Activated CD4-positive, alpha-beta memory T cell treated with anti-CD3 and anti-CD28 coated beads, Interleukin-2, amount 10 ng/mL, durations not matched to agents 7 days and 5 days (primary cell): ENCODE measurements at regions of chr4 and their contacts with region 1.

Region 1: GRCh38 chr4:26885912-26886274 is 25.3 kb downstream of the STIM2 start:
- DNase-seq: peak; percentile 42
- H3K4me3 Mint-ChIP-seq: peak overlapping the region; percentile 72
- H3K27ac Mint-ChIP-seq: peak overlapping the region; percentile 95
- H3K4me1 Mint-ChIP-seq: peaks cover 70% of the 10 kb centered on the region
- H3K27me3 Mint-ChIP-seq: no peaks in the 10 kb centered on the region

Region 2: DNA sequence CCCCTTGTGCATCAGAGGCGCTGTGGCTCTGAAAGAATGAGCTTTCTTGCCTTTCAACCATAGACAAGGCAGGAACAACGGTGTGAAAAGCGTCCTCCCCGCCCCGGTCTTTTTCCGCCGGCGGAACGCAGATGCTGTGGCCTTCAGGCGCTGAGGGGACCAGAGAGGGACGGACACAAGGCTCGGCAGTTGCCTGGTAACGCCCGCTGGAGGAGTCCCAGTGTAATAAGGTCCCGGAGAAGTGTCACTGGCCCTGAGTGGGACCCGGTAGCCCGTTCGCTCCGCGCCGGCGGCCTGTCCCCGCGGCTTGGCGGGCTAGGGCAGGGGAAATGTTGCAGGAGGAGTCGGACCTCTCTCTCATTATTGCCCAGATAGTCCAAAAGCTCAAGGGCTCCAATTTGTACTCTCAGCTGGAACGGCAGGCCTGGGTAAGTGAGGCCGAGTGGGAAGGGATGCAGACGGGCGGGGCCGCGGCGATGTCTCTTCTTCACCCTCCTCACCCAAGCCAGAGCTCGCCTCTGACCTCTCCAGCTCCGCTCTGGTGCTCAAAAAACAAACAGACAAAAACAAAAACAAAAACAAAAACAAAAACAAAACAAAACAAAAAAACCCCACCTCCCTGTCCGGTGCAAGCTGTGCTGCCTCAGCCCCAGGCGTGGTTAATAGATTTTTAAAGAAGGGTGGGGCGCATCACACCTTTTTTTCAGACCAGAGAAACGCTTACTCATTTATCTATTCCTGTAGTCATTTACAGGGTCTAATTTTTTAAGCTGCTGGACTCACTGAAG is 301.8 kb before region 1 on chr4 and contains the start of gene TBC1D19:
- CTCF ChIA-PET with region 1: no interaction called
- POLR2A ChIA-PET with region 1: interaction called, 20 read pairs
- DNase-seq: peak; percentile 91
- H3K4me3 Mint-ChIP-seq: peak within 1 kb of the TSS; percentile 90
- H3K27ac Mint-ChIP-seq: peak within 1 kb of the TSS; percentile 86
- H3K4me1 Mint-ChIP-seq: peaks cover 33% of the 10 kb centered on the region
- H3K27me3 Mint-ChIP-seq: no peaks in the 10 kb centered on the region
- total RNA-seq, gene TBC1D19: 5.6 to 7.1 TPM

Region 3: DNA sequence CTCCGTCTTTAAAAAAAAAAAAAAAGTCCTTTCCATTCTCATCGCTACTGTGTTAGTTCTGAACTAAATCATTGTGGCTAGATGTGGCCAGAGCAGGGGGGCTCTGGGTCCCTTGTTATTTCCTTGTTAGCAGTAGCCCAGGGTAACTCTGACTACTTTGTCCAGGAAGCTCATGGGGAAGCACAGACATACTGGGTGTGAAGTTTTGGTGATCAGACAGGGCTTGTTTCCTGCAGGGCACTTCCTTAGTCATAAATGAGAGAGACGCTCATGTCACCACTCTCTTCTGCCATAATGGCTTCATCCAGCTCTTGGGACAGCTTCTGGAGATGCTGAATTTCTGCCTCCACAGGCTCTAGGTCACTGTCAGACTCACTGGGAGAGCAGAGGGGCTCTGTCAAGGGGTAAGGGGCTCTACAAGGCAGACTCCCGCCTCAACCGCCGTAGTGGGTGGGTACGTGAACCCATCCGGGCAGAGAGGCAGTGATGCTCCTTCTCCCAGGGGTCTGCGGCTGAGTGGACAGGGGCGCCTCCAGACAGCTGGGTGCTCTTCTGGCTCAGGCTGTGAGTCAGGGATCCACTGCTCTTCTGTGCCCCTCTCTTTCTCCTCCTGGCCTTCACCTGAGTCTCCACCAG is 12.4 kb before region 1 on chr4:
- CTCF ChIA-PET with region 1: interaction called, 6 read pairs
- POLR2A ChIA-PET with region 1: interaction called, 59 read pairs
- DNase-seq: peak; percentile 75
- H3K4me3 Mint-ChIP-seq: peak overlapping the region; percentile 52
- H3K27ac Mint-ChIP-seq: peak overlapping the region; percentile 73
- H3K4me1 Mint-ChIP-seq: peaks cover 67% of the 10 kb centered on the region
- H3K27me3 Mint-ChIP-seq: no peaks in the 10 kb centered on the region

Region 4: GRCh38 chr4:26899991-26900390 is 14.1 kb after region 1 on chr4:
- CTCF ChIA-PET with region 1: no interaction called
- POLR2A ChIA-PET with region 1: interaction called, 37 read pairs
- DNase-seq: no peak
- H3K4me3 Mint-ChIP-seq: no peak overlapping the region
- H3K27ac Mint-ChIP-seq: no peak overlapping the region
- H3K4me1 Mint-ChIP-seq: peaks cover 56% of the 10 kb centered on the region
- H3K27me3 Mint-ChIP-seq: no peaks in the 10 kb centered on the region

Region 5: GRCh38 chr4:26992657-26993361 is 106.9 kb after region 1 on chr4:
- CTCF ChIA-PET with region 1: interaction called, 3 read pairs
- POLR2A ChIA-PET with region 1: interaction called, 15 read pairs
- DNase-seq: no peak
- H3K4me3 Mint-ChIP-seq: no peak overlapping the region
- H3K27ac Mint-ChIP-seq: no peak overlapping the region
- H3K4me1 Mint-ChIP-seq: peaks cover 15% of the 10 kb centered on the region
- H3K27me3 Mint-ChIP-seq: no peaks in the 10 kb centered on the region